Activated B cell treated with CpG ODN at 0.5 μM for 24 hours (primary cell): ENCODE measurements at regions of chrX and their contacts with region 1.

Region 1: DNA sequence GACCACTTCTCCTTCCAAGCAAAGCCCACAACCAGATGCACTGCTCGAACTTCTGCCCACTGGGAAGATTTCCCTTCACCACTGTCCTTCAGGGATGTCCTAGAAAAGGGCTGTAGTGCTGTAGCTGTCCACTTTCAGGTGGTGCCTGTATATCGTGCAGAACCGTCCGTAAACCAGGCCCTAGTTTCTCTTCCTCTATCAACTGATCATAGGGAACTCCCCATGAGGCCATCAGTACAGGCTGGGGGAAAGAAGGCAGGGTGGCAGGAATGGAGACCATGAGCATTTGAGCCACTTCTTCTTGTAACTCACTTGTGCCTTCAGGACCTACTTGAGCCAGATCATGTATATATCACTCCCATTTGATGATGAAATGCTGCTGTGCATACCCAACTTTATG is 57.3 kb upstream of the FAM9B start:
- DNase-seq: peak; percentile 15
- ATAC-seq: peak; percentile 42
- H3K4me3 Mint-ChIP-seq: peak overlapping the region; percentile 15
- H3K27ac Mint-ChIP-seq: peak overlapping the region; percentile 65
- H3K4me1 Mint-ChIP-seq: peaks cover 13% of the 10 kb centered on the region
- H3K27me3 Mint-ChIP-seq: peaks cover 4% of the 10 kb centered on the region
- CTCF ChIP-seq: no peak

Region 2: DNA sequence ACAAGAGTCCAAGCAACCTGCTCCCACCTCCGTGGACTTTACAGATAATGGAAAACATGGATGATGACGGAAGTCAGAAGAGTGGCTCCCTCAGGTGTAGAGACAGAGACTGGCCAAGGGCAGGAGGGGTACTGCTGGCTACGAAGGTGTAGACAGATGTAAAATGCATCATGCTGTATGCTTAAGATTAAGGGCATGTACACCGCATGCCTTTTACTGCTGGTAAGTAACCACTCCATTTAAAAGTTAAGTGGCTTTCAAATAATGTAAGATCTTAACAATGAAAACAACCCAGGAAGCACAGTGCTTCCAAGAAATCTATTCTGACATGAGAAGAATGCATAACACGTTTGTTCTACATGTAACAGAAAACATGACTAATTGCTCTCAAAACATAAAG is 19.6 kb after region 1 on chrX:
- CTCF ChIA-PET with region 1: no interaction called
- POLR2A ChIA-PET with region 1: no interaction called
- intact Hi-C with region 1: no loop called
- DNase-seq: no peak
- ATAC-seq: no peak
- H3K4me3 Mint-ChIP-seq: no peak overlapping the region
- H3K27ac Mint-ChIP-seq: no peak overlapping the region
- H3K4me1 Mint-ChIP-seq: no peaks in the 10 kb centered on the region
- H3K27me3 Mint-ChIP-seq: no peaks in the 10 kb centered on the region
- CTCF ChIP-seq: no peak

Region 3: GRCh38 chrX:9163214-9163681 is 72.0 kb after region 1 on chrX:
- CTCF ChIA-PET with region 1: no interaction called
- POLR2A ChIA-PET with region 1: interaction called, 9 read pairs
- intact Hi-C with region 1: loop called (anchors 5 kb)
- DNase-seq: no peak
- ATAC-seq: no peak
- H3K4me3 Mint-ChIP-seq: no peak overlapping the region
- H3K27ac Mint-ChIP-seq: no peak overlapping the region
- H3K4me1 Mint-ChIP-seq: peaks cover 28% of the 10 kb centered on the region
- H3K27me3 Mint-ChIP-seq: peaks cover 8% of the 10 kb centered on the region
- CTCF ChIP-seq: no peak